Left cardiac atrium (tissue), 4 donors: ENCODE measurements at regions of chr19 and their contacts with region 1.

Region 1: GRCh38 chr19:37906869-37907734 is at the start of gene SIPA1L3:
- DNase-seq: peak; percentile 96
- ATAC-seq: peak; percentile 99
- total RNA-seq, gene SIPA1L3: 9.8 to 10.0 TPM

Region 2: GRCh38 chr19:38004521-38005223 is 97.6 kb after region 1 on chr19:
- intact Hi-C with region 1: loop called in 1 of 2 experiments (anchors 5 kb)
- DNase-seq: peak; percentile 84
- ATAC-seq: peak; percentile 97 to 98

Region 3: GRCh38 chr19:38095411-38096308 is 188.6 kb after region 1 on chr19:
- intact Hi-C with region 1: loop called (anchors 5 kb)
- DNase-seq: peak; percentile 72
- ATAC-seq: peak; percentile 60 to 61